ENCODE measurements at regions of chr7 and their contacts with region 1.

Region 1: DNA sequence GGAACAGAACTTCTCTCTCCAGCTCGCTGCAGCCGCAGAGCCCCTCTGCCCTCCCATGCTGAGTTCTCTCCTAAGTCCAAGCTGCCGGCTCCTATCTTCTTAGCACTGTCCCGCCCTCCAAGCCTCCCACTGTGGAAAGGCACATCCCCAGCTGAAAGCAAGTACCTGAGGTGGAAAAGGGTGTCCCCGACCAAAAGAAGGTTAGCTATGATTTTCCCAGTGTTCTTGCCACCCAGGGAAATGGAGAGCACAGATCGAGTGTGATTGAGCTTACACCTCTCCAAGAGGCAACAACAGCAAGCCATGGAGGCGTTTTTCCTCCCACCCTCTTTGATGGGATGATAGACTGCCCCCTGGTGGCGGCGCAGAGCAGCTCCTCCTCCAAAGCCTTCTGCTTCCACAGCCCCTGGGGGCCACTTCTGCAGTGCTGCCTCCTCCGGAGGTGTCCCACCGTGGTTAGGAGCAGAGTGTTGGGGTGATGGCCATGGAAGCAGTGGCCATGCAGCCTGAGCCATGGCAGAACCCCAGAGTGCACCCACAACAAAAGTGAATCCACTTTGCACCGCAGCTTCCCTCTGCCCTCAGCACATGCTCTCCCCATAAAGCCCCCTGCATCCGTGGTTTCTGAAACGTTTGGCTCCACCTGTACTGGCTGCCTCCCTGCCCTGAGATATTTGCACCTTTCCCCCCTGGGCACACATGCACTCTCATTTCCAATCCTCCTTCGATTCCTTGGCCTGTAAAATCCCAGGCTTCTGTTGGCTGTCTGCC is 143.1 kb upstream of the STK17A start:
- DNase-seq: peak; percentile 83
- CTCF ChIP-seq: peak; percentile 82

Region 2: DNA sequence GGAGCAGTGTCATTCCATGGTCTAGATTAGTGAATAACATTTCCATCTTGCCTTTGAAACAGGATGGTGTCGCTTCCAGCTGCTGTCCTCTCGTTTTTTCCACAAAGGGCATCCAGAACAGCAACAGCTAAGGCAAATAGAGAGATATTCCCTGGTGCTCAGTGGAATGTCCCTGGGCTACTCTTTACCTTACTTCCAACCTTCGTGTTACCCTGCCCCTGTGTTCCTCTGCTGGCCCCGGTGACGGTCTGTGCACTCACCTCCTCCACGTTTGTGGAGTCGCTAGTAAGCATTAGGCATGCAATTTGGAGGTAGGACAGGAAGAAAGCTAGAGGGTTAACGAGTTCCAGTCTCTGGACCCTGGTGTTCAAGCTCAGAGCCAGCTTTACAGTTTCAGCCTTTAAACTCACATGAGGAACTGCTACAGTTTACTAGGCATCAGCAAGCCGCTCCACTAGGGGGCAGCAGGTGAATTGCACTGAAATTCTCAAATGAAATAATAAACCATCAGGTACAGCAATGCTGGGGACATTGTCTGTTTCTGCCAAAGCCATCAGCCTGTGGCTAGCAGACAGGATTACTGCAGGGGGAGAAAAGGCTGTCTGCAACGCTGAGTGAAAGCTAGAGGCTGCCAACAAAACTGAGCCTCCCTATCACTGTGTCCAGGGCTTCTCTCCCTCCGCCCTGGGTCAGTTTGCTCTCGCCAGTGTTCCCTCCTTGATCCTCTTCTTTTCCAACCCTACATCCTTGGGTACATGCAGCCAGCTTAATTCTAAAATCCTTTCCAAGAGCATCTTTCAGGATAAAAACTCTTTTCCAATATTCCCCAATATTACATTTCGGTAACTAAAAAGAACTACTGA is 498.6 kb before region 1 on chr7:
- CTCF ChIA-PET with region 1: interaction called, 16 read pairs
- POLR2A ChIA-PET with region 1: no interaction called
- DNase-seq: peak; percentile 62
- CTCF ChIP-seq: peak; percentile 86

Region 3: GRCh38 chr7:43164757-43165156 is 275.1 kb before region 1 on chr7:
- CTCF ChIA-PET with region 1: no interaction called
- POLR2A ChIA-PET with region 1: no interaction called
- DNase-seq: peak; percentile 72
- CTCF ChIP-seq: no peak

Region 4: GRCh38 chr7:43454936-43455518 is 15.2 kb after region 1 on chr7:
- CTCF ChIA-PET with region 1: interaction called, 37 read pairs
- POLR2A ChIA-PET with region 1: no interaction called
- DNase-seq: peak; percentile 66
- CTCF ChIP-seq: peak; percentile 52

Region 5: GRCh38 chr7:43465581-43466554 is 26.1 kb after region 1 on chr7:
- CTCF ChIA-PET with region 1: interaction called, 24 read pairs
- POLR2A ChIA-PET with region 1: no interaction called
- DNase-seq: no peak
- CTCF ChIP-seq: no peak

Region 6: GRCh38 chr7:43612599-43613589 is 173.1 kb after region 1 on chr7:
- CTCF ChIA-PET with region 1: no interaction called
- POLR2A ChIA-PET with region 1: no interaction called
- DNase-seq: peak; percentile 59
- CTCF ChIP-seq: no peak

Region 7: GRCh38 chr7:43658718-43659548 is 219.1 kb after region 1 on chr7:
- CTCF ChIA-PET with region 1: no interaction called
- POLR2A ChIA-PET with region 1: no interaction called
- DNase-seq: peak; percentile 55
- CTCF ChIP-seq: no peak

Measured in GM10248 (cell line).